MCF 10A (cell line): ENCODE measurements at regions of chr17 and their contacts with region 1.

Region 1: GRCh38 chr17:8894673-8895578 is 27.5 kb upstream of the PIK3R6 start:
- DNase-seq: peak; percentile 60
- H3K4me3 Mint-ChIP-seq: no peak overlapping the region
- H3K27ac Mint-ChIP-seq: no peak overlapping the region
- H3K4me1 Mint-ChIP-seq: no peaks in the 10 kb centered on the region
- H3K27me3 Mint-ChIP-seq: peaks cover 10% of the 10 kb centered on the region
- CTCF ChIP-seq: peak; percentile 53

Region 2: GRCh38 chr17:8753976-8754440 is 140.9 kb before region 1 on chr17:
- CTCF ChIA-PET with region 1: interaction called, 15 read pairs
- POLR2A ChIA-PET with region 1: no interaction called
- intact Hi-C with region 1: no loop called
- DNase-seq: peak; percentile 36
- H3K4me3 Mint-ChIP-seq: no peak overlapping the region
- H3K27ac Mint-ChIP-seq: no peak overlapping the region
- H3K4me1 Mint-ChIP-seq: no peaks in the 10 kb centered on the region
- H3K27me3 Mint-ChIP-seq: peaks cover 60% of the 10 kb centered on the region
- CTCF ChIP-seq: peak; percentile 22

Region 3: DNA sequence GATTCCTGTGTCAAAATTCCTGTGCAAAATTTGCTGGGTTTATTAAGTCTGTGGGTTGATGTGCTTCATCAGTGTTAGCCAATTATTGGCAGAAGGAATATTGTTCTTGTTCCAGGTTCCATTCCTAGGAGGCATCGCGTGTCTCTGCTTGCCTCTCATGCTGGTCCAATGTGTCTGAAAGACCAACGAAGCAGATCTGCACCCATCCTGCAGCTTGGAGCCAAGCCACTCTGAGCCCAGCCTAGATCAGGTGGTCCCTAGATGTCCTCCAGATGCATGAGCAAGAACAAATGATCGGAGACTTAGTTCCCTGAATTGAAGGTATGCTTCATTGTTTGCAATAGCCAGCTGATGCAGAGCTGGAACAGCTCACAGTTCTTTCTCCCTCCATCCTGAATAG is 16.9 kb before region 1 on chr17:
- CTCF ChIA-PET with region 1: interaction called, 10 read pairs
- POLR2A ChIA-PET with region 1: no interaction called
- intact Hi-C with region 1: no loop called
- DNase-seq: no peak
- H3K4me3 Mint-ChIP-seq: no peak overlapping the region
- H3K27ac Mint-ChIP-seq: no peak overlapping the region
- H3K4me1 Mint-ChIP-seq: no peaks in the 10 kb centered on the region
- H3K27me3 Mint-ChIP-seq: no peaks in the 10 kb centered on the region
- CTCF ChIP-seq: no peak

Region 4: GRCh38 chr17:8909586-8910270 is 14.8 kb after region 1 on chr17:
- CTCF ChIA-PET with region 1: interaction called, 13 read pairs
- POLR2A ChIA-PET with region 1: interaction called, 3 read pairs
- intact Hi-C with region 1: no loop called
- DNase-seq: no peak
- H3K4me3 Mint-ChIP-seq: no peak overlapping the region
- H3K27ac Mint-ChIP-seq: no peak overlapping the region
- H3K4me1 Mint-ChIP-seq: no peaks in the 10 kb centered on the region
- H3K27me3 Mint-ChIP-seq: peaks cover 3% of the 10 kb centered on the region
- CTCF ChIP-seq: no peak